ENCODE measurements at regions of chr7 and their contacts with region 1.

Region 1: GRCh38 chr7:151782598-151783448 is 94.1 kb downstream of the PRKAG2 start:
- DNase-seq: peak; percentile 63 to 74
- ATAC-seq: peak; percentile 83 to 92 (median 88)
- H3K4me3 ChIP-seq: peak overlapping the region in 8 of 10 donors; percentile 14 to 43 (median 35)
- H3K27ac ChIP-seq: peak overlapping the region in 2 of 10 donors; percentile 14 to 38
- H3K4me1 ChIP-seq: peaks cover 0 to 12% (median 9%) of the 10 kb centered on the region in 9 donors
- H3K27me3 ChIP-seq: no peaks in the 10 kb centered on the region
- CTCF ChIP-seq: peak; percentile 74 to 95 (median 92)

Region 2: DNA sequence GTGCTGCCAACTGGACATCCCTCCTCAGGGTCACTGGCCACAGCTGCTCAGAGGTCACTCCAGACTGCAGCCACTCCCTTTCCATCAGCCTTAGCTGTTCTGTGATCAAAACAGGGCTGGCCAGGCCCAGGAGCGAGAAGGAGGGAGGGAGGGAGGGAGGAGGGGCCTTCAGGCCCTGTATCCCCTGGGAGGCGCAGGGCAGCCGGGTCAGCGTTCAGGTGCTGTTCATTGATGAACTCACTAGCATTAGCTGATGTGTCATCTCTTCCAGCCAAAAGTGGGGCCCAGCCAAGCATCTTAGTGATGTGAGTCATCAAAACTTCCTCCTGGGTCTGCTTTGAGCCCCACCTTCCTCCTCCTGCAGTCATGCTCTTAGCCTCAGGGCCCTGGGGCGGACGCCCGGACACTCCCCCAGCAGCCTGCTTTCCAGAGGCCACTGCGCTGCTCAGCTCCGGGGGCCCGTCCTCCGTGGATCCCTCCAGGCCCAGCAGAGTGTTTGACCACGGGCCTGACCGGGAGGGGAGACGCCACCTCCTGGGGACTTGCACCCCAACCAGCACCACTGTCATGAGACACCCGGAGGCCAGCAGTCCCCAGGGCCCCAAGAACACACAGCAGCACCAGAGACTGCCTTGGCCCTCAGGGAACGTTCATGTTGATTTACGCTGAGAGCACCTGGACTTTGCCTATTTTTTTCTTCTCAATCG is 55.1 kb before region 1 on chr7:
- intact Hi-C with region 1: no loop called
- DNase-seq: peak; percentile 53 to 56
- ATAC-seq: peak; percentile 39 to 83 (median 58)
- H3K4me3 ChIP-seq: no peak overlapping the region
- H3K27ac ChIP-seq: peak overlapping the region in 9 of 10 donors; percentile 26 to 76 (median 56)
- H3K4me1 ChIP-seq: peaks cover 16 to 75% (median 42%) of the 10 kb centered on the region in 9 donors
- H3K27me3 ChIP-seq: no peaks in the 10 kb centered on the region
- CTCF ChIP-seq: no peak

Region 3: DNA sequence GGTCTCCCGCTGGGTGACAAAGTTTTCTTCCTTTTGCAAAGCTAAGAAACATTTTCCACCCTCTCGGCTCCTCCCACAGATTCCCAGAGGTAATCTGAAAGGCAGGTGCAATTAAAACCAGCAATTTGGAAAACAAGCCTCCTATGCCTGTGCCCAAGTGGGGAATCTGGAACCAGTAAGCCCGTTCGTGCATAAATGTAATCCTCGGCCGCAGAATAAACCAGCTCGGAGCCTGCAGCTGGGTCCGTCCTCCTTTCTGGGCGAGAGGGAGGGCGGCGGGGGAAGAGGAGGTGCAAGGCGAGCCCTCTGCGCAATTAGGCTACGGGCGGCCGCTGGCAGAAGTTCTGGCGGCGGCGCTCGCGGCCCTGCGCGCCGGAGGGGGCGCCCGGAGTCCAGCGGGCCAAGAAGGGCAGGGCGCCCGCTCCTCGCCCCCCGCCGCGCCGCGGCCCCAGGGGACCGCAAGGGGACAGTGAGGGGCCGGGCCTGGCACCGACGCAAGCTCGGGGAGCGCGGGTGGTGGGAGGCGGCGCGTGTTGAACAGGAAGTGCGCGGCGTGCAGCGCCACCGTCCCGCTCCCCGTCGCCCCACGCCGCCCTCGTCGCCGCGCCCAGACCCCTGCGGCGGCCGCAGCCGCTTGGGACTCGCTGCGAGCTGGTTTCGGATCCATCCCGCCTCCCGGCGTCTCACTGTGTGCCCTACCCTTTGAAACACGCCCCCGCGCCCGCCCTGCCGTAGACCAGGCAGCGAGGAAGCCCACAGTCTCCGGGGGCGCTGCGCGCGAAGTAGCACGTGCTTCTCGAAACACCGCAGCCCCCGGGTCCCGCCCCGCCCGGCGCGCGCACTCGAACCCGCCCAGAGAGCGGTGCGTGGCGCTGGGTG is 94.3 kb after region 1 on chr7 and contains the start of gene PRKAG2:
- intact Hi-C with region 1: loop called in 2 of 10 experiments (anchors 10 kb)
- DNase-seq: peak; percentile 59 to 73
- ATAC-seq: peak; percentile 36 to 62 (median 52)
- H3K4me3 ChIP-seq: peak within 1 kb of the TSS; percentile 33 to 95 (median 80)
- H3K27ac ChIP-seq: peak within 1 kb of the TSS; percentile 80 to 97 (median 95)
- H3K4me1 ChIP-seq: peaks cover 0 to 34% (median 21%) of the 10 kb centered on the region in 9 donors
- H3K27me3 ChIP-seq: peaks cover 0 to 10% (median 8%) of the 10 kb centered on the region in 7 donors
- CTCF ChIP-seq: peak in 3 of 9 donors; percentile 19 to 27 (median 23)
- total RNA-seq, gene PRKAG2: 101 to 156 (median 121) TPM

Region 4: DNA sequence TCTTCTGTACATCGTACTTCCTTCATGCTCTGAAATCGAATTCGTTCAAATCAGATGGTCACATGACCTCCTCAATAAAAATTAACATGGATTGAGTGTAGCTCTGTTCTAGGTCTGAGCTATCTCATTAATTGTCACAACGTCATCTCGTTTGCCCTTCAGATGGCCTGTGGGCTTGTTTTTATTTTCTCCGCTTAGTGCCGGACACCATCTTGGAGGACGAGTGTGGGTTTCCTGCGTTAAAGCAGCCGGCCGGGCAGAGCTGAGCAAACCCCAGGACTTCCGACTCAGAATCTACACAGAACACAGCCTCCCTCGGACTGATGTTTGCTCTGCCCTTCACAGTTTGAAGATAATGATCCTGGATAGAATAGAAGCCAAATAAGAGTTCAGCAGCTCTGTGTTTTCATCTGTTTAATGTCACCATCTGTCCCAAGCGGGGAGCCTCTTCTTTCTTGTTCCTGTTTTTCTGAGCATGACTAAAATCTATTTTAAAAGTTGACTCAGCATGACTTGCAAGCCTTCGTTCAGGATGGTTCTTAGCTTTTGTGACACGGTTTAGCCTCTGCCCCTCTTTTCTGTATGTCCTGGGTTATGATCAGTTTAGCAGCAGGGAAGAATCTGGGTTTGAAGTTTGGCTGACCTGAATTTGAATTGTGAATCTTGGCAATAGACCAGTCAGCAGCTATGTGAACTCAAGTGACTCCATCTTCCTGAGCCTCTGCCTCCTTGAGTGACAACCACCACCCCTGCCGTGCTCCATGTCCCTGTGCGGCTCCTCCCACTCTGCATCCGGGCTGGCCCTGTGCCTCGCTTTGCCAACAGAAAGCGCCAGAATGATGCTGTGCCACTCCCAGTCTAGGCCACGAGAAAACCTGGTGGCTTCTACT is 142.9 kb after region 1 on chr7:
- intact Hi-C with region 1: loop called in 6 of 10 experiments (anchors 5 to 10 kb)
- DNase-seq: peak; percentile 33 to 63
- ATAC-seq: peak; percentile 41 to 81 (median 64)
- H3K4me3 ChIP-seq: peak overlapping the region in 1 of 10 donors; percentile 27
- H3K27ac ChIP-seq: peak overlapping the region in 9 of 10 donors; percentile 29 to 93 (median 40)
- H3K4me1 ChIP-seq: peaks cover 0 to 52% (median 4%) of the 10 kb centered on the region in 9 donors
- H3K27me3 ChIP-seq: no peaks in the 10 kb centered on the region
- CTCF ChIP-seq: no peak

Region 5: GRCh38 chr7:151932358-151932876 is 149.6 kb after region 1 on chr7:
- intact Hi-C with region 1: loop called in 9 of 10 experiments (anchors 2 to 10 kb)
- DNase-seq: no peak
- ATAC-seq: peak in 7 of 8 donors; percentile 54 to 75 (median 65)
- H3K4me3 ChIP-seq: no peak overlapping the region
- H3K27ac ChIP-seq: peak overlapping the region in 1 of 10 donors; percentile 72
- H3K4me1 ChIP-seq: peaks cover 0 to 35% (median 0%) of the 10 kb centered on the region in 9 donors
- H3K27me3 ChIP-seq: peaks cover 0 to 8% (median 0%) of the 10 kb centered on the region in 7 donors
- CTCF ChIP-seq: no peak

Region 6: DNA sequence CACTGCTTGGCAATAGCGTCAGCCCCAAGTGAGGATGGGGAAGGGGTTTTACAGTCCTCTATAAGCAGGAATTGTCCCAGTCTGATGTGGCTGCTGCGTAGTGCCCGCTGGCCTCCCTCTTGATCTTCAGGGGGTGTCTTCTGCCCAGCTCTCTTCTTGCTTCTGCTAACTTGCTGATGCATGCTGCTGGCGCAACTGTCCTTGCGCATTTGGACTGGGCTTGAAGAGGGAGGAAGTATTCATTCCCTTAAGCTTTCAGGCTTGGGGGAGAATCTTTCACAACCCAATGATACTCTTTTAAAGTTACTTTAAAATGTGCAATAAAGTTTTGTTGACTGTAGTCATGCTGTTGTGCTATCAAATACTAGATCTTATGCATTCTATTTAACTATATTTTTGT is 253.0 kb after region 1 on chr7:
- intact Hi-C with region 1: loop called in 1 of 10 experiments (anchors 10 kb)
- DNase-seq: no peak
- ATAC-seq: no peak
- H3K4me3 ChIP-seq: no peak overlapping the region
- H3K27ac ChIP-seq: no peak overlapping the region
- H3K4me1 ChIP-seq: peaks cover 0 to 5% (median 0%) of the 10 kb centered on the region in 9 donors
- H3K27me3 ChIP-seq: no peaks in the 10 kb centered on the region
- CTCF ChIP-seq: no peak

Region 7: DNA sequence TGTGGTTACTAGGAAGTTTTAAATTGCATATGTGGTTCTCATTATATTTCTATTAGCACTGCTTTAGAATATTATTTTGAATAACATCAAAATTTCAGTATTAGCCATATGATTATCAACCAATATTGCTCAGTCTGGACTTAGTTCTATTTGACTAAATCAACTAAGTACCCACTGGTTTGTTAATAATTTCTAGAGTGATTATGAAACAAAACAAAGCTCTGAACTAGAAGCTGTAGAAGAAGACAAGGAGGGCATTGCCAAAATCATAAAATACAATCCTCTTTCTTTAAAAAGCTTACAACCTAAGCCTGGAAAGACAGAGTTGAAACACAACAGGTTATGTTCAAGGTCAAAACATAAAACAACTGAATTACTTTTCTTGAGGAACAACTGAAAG is 448.3 kb after region 1 on chr7:
- intact Hi-C with region 1: no loop called
- DNase-seq: no peak
- ATAC-seq: no peak
- H3K4me3 ChIP-seq: no peak overlapping the region
- H3K27ac ChIP-seq: no peak overlapping the region
- H3K4me1 ChIP-seq: no peaks in the 10 kb centered on the region
- H3K27me3 ChIP-seq: no peaks in the 10 kb centered on the region
- CTCF ChIP-seq: no peak

Measured in heart right ventricle (tissue), 16 donors.